Activated T-helper 2 cell treated with anti-CD3 and anti-CD28 coated beads, Interferon-gamma antibody, Interleukin-2, Interleukin-4, amounts not matched to agents 10 μg/mL and 5 μg/mL and 100 μg/mL, durations not matched to agents 14 hours and 24 hours and 36 hours (primary cell): ENCODE measurements at regions of chr3 and their contacts with region 1.

Region 1: DNA sequence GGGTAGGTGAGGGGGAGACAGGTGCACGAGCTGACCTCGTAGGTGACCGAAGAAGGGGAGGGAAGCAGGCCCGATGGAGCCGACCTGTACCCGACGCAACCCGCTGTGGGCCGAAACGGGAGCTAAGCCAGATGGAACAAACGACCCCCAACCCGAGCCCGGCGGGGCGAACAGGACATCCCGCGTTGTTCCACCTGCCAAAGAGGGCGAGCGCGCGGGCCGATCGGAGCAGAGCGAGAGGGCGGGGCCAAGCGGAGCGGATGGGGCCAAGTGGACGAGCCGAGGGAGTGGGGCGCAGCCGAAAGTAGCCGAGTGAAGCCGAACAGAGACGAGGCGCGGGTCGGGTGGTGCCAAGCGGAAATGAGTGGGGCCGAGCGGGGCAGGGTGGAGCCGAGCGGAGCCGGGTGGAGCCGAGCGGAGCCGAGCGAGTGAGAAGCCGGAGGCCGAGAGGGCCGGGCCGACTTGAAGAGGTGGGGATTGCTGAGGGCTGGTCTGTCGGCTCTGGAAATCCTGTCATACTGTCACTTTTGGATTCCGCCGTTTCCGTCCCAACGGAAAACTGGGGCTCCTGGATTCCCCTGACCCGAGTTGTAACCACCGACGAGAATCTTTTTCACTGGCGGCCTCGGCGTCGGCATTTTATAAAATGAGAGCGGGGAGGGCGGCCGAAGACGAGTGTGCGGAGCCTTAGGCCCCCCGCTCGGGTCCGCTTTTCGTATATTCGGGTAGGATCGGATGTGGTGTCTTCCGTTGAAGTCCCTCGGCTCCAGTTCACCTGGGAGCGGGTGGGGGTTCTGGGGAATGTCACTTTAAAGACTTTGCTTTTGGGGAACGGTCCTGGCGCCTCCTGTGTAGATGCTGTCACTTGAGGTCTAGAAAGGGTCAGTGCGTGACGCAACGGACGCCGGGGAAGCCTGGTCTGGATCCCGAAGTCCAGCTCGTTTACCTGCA is 15.6 kb upstream of the WNT7A start:
- DNase-seq: peak; percentile 95
- H3K4me3 Mint-ChIP-seq: peak overlapping the region; percentile 87
- H3K27ac Mint-ChIP-seq: peak overlapping the region; percentile 71
- H3K4me1 Mint-ChIP-seq: peaks cover 21% of the 10 kb centered on the region
- H3K27me3 Mint-ChIP-seq: peaks cover 3% of the 10 kb centered on the region

Region 2: DNA sequence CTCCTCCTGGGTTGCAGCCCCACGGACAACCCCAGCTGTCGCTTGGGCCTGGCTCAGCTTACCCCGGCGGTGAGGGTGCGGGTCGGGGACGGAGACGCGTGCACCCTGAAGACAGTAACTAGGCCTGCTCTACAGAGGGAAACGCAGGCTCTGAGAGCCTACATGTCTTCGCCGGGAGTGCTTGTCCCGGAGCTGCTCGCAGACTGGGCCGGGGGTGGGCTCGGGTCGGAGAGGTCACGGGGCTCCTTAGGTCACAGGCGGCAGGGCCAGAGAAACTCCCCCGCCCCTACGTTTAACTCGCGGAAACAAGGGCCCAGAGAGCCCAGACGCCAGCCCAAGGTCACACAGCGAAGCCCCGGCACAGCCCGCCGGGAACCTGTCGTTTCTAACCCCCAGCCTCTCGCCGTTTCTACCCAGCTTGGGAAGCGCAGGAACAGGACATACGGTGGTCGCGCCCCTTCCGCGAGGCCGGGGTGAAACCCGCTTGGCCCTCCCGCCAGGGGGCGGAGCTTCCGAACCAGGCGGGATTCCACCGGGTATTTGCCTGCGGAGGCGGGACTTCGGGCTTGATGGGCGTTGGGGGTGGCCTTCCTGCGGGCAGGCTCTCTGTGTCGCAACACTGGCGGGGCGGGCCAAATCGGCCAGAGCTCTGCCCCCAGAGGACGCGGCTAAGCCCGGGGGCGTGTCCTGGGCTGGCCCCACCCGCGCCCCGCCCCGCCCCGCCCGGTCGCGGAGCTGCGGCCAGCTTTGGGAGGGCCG is 415.7 kb before region 1 on chr3 and contains the start of gene HDAC11:
- intact Hi-C with region 1: loop called (anchors 10 kb)
- DNase-seq: peak; percentile 97
- H3K4me3 Mint-ChIP-seq: peak within 1 kb of the TSS; percentile 86
- H3K27ac Mint-ChIP-seq: peak within 1 kb of the TSS; percentile 79
- H3K4me1 Mint-ChIP-seq: peaks cover 2% of the 10 kb centered on the region
- H3K27me3 Mint-ChIP-seq: peaks cover 3% of the 10 kb centered on the region
- total RNA-seq, gene HDAC11: 1.7 and 2.6 TPM in 2 replicates

Region 3: DNA sequence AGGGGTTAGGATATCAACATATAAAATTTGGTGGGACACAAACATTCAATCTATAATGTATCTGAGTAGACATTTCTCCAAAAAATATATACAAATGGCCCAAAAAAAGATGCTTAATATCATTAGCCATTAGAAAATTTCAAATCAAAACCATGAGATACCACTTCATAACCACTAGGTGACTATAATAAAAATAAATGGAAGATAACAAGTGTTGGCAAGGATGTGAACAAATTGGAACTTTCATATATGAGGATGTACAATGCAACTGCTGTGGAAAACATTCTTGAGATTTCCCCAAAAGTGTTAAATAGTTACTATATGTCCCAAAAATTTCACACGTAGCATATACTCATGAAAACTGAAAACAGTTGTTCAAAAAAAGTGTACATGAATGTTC is 20.9 kb after region 1 on chr3:
- intact Hi-C with region 1: no loop called
- DNase-seq: no peak
- H3K4me3 Mint-ChIP-seq: no peak overlapping the region
- H3K27ac Mint-ChIP-seq: no peak overlapping the region
- H3K4me1 Mint-ChIP-seq: no peaks in the 10 kb centered on the region
- H3K27me3 Mint-ChIP-seq: no peaks in the 10 kb centered on the region

Region 4: DNA sequence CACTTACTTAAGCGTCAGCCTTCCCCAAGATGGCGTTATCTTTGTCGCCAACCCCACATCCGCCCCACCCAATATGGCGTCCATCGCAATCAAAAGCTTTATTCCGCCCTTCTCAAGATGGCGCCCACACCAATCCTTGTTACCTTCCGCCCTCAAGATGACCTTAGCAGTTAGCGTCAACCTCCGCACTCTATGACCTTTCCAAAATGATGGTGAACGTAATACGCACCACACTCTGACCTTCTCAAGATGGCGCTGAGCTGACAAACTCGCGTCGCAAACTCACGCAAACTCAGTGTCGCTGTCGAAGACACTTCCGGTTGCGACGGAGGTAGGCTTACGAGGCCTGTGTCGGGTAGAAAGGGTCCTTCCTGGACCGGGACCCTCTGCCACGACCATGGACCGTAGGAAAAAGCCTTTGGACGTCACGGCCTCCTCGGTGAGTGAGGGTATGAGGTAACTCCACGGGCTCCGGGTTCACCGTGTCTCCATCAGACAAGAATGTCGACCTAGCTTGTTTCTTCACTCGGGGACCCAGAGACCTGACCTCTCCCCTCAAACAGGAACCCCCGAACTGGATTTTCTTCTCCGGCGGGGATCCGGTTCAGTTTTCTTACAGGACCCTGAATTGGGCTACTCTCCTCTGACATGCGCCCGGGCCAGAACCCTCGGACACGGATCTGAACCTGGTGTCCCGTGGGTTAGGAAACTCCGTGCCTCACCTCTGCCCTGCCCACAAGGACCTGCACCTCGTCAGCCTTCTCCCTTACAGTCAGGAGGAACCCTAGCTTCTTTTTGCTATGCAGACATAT is 756.2 kb after region 1 on chr3 and contains the start of gene CCDC174:
- intact Hi-C with region 1: loop called (anchors 1 kb)
- DNase-seq: peak; percentile 94
- H3K4me3 Mint-ChIP-seq: peak within 1 kb of the TSS; percentile 92
- H3K27ac Mint-ChIP-seq: peak within 1 kb of the TSS; percentile 95
- H3K4me1 Mint-ChIP-seq: peaks cover 30% of the 10 kb centered on the region
- H3K27me3 Mint-ChIP-seq: no peaks in the 10 kb centered on the region
- total RNA-seq, gene CCDC174: 15.0 and 18.8 TPM in 2 replicates